ENCODE measurements at regions of chr5 and their contacts with region 1.

Region 1: DNA sequence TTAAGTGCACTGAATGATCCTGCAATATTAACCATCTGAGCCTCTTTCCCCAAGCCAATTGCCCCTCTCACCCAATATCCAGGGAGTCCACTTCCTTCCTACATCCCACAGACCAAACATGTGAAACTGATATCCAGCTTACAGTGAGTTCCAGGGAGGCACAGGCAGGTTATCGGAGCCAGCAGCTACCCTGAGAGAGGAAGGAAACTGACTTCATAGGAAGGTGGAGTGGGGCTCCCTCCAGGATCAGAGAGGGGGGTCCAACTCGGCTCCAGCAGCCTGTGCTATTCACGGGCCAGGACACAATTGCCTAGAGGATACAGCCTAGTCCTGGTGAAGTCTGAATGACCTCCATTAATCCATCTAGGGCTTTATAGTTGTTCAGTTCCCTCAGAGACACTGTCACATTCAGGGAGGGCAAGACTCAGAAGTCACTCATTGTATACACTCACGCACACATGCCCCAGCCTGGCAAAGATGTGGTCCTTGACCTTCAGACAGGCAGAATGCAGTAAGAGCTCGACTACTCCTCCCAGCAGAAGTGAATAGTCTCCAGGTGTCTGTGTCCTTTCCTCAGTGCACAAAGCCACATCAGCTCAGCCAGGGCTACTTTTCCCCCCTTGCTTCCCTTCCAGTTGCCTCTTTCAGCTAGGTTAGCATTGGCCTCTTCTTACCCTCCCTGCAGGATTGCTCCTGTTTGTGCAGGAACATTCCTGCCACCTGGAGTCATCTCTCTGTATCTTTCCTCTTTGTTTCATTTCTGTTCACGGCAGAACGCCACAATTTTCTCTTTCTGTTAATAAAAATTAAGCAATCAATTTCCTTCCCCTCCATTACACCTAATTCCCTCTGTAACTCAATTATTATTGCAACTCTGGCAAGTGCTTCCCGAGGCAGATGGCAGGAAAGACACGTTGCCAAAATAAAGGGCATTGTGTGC is 501.7 kb downstream of the ARHGEF28 start:
- DNase-seq: peak; percentile 97
- H3K4me3 ChIP-seq: peak overlapping the region in 1 of 3 experiments; percentile 29
- H3K27ac ChIP-seq: peak overlapping the region; percentile 74
- H3K4me1 ChIP-seq: peaks cover 34% of the 10 kb centered on the region
- H3K27me3 ChIP-seq: no peaks in the 10 kb centered on the region
- CTCF ChIP-seq: peak in 1 of 2 donors; percentile 21
- POLR2A ChIP-seq: peak; percentile 56

Region 2: DNA sequence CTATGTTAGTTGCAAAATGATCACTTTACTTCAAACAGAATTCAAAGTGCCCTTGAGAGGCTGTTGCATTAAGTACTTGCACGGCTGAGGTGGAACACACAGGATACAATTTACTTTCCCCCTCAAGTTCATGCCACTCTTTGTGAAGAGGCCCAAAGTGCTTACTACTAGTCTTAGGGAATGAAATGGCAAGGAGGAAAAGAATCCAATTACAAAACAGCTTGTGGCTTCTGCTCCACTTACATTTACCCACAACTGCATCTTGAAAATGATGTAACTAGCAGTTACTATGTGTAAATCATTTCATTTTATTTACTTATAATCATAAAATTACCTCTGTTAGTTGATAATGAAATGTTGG is 693.7 kb before region 1 on chr5:
- CTCF ChIA-PET with region 1: no interaction called
- POLR2A ChIA-PET with region 1: no interaction called
- dilution Hi-C with region 1: no loop called
- intact Hi-C with region 1: no loop called
- DNase-seq: no peak
- H3K4me3 ChIP-seq: no peak overlapping the region
- H3K27ac ChIP-seq: no peak overlapping the region
- H3K4me1 ChIP-seq: peaks cover 6% of the 10 kb centered on the region
- H3K27me3 ChIP-seq: peaks cover 73 to 92% of the 10 kb centered on the region in 2 experiments
- CTCF ChIP-seq: no peak
- POLR2A ChIP-seq: no peak

Region 3: GRCh38 chr5:74056789-74057164 is 70.9 kb before region 1 on chr5:
- CTCF ChIA-PET with region 1: interaction called, 4 read pairs
- POLR2A ChIA-PET with region 1: no interaction called
- dilution Hi-C with region 1: no loop called
- intact Hi-C with region 1: loop called (anchors 2 kb)
- DNase-seq: peak; percentile 64
- H3K4me3 ChIP-seq: no peak overlapping the region
- H3K27ac ChIP-seq: no peak overlapping the region
- H3K4me1 ChIP-seq: no peaks in the 10 kb centered on the region
- H3K27me3 ChIP-seq: no peaks in the 10 kb centered on the region
- CTCF ChIP-seq: peak; percentile 39 to 57
- POLR2A ChIP-seq: no peak

Region 4: GRCh38 chr5:74098941-74099340 is 28.7 kb before region 1 on chr5:
- CTCF ChIA-PET with region 1: interaction called, 3 read pairs
- POLR2A ChIA-PET with region 1: interaction called, 4 read pairs
- dilution Hi-C with region 1: no loop called
- intact Hi-C with region 1: loop called (anchors 2 kb)
- DNase-seq: no peak
- H3K4me3 ChIP-seq: no peak overlapping the region
- H3K27ac ChIP-seq: no peak overlapping the region
- H3K4me1 ChIP-seq: peaks cover 7% of the 10 kb centered on the region
- H3K27me3 ChIP-seq: no peaks in the 10 kb centered on the region
- CTCF ChIP-seq: no peak
- POLR2A ChIP-seq: no peak

Region 5: DNA sequence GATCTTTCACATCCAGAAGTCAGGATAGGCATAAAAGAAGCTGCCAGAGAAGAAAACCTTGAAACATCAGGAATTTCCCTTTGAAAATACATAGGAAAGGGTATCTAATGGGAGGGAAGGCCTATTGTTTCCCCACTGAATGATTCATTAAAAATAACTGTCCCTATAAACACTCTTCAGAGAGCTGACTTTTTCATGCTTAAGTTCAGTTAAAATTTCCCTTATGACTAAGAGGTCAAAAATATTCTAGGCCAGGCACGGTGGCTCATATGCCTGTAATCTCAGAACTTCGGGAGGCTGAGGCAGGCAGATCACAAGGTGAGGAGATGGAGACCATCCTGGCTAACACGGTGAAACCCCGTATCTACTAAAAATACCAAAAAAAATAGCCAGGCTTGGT is 13.4 kb after region 1 on chr5:
- CTCF ChIA-PET with region 1: interaction called, 15 read pairs
- POLR2A ChIA-PET with region 1: interaction called, 3 read pairs
- dilution Hi-C with region 1: no loop called
- intact Hi-C with region 1: no loop called
- DNase-seq: peak; percentile 89
- H3K4me3 ChIP-seq: no peak overlapping the region
- H3K27ac ChIP-seq: peak overlapping the region; percentile 52
- H3K4me1 ChIP-seq: peaks cover 9% of the 10 kb centered on the region
- H3K27me3 ChIP-seq: no peaks in the 10 kb centered on the region
- CTCF ChIP-seq: no peak
- POLR2A ChIP-seq: no peak

Region 6: DNA sequence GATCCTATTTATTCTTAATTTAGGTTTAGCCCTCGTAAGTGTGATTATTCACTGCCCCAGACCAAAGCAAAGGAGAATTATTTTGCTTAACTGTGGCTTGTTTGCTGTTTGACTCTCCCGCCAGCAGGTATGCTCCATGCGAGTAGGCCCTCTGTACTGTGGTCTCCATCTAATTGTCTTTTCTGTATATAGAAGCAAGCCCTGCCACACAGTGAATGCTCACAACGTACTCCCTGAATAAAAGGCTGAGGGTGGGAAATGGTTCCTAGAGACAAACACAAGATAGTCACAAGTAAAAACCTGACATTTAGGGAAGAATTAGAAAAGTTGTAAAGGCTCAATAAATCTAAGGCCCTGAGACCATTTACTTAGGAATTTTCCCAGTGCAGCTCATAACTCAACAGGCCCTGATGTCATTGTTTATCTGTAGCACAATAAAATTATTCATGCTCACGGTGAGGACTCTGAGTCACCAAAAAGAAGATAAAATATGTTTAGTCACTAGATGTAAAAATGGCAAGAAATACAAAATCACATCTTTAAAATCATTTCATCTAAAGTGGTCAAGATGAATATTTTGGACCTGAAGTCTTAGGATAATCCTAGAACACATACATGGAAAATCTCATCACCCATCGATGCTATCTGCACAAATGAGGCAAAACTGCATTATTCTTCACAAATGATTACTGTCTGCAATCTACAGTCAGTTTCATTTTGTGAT is 39.7 kb after region 1 on chr5:
- CTCF ChIA-PET with region 1: no interaction called
- POLR2A ChIA-PET with region 1: no interaction called
- dilution Hi-C with region 1: no loop called
- intact Hi-C with region 1: loop called (anchors 1 kb)
- DNase-seq: peak; percentile 84
- H3K4me3 ChIP-seq: no peak overlapping the region
- H3K27ac ChIP-seq: peak overlapping the region; percentile 60
- H3K4me1 ChIP-seq: peaks cover 20% of the 10 kb centered on the region
- H3K27me3 ChIP-seq: peaks cover 2% of the 10 kb centered on the region in 2 experiments
- CTCF ChIP-seq: no peak
- POLR2A ChIP-seq: no peak

Region 7: DNA sequence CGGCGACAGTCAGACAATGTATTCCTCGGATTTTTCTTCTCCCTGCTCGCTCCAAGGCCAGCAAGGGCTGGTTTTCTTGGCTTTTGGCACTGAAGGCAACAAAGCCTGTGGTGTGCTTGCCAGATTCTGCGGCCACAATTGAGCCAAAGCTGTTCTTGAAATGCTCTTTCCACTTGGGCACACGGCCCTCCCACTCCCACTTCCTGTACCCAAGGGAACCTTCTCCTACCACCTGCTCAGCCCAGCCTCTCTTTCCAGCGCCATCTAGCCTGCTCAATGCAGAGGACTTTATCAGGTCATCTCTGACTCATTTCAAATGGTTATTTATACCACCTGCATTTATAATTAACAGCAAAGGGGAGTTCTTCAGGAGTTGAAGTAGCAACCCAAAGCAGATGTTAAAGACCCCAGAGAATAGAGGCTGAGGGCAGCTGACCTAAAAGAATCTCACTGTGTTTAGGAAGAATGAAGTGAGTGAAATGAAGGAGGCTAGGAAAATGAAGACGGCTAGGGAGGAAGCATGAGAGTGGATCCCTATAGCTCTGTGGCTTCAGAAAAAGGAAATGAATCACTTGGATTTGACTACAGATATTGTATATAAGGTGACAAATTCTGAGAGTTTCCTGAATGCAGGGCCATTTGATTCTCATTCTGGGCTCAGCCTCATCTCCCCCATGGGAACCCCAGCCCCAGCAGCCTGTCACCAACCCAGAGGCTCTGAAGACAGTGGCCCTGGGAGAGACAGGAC is 73.9 kb after region 1 on chr5:
- CTCF ChIA-PET with region 1: no interaction called
- POLR2A ChIA-PET with region 1: no interaction called
- dilution Hi-C with region 1: no loop called
- intact Hi-C with region 1: loop called (anchors 2 kb)
- DNase-seq: peak; percentile 85
- H3K4me3 ChIP-seq: peak overlapping the region in 1 of 3 experiments; percentile 11
- H3K27ac ChIP-seq: peak overlapping the region; percentile 49
- H3K4me1 ChIP-seq: peaks cover 25% of the 10 kb centered on the region
- H3K27me3 ChIP-seq: peaks cover 0 to 5% of the 10 kb centered on the region in 2 experiments
- CTCF ChIP-seq: no peak
- POLR2A ChIP-seq: no peak

Region 8: DNA sequence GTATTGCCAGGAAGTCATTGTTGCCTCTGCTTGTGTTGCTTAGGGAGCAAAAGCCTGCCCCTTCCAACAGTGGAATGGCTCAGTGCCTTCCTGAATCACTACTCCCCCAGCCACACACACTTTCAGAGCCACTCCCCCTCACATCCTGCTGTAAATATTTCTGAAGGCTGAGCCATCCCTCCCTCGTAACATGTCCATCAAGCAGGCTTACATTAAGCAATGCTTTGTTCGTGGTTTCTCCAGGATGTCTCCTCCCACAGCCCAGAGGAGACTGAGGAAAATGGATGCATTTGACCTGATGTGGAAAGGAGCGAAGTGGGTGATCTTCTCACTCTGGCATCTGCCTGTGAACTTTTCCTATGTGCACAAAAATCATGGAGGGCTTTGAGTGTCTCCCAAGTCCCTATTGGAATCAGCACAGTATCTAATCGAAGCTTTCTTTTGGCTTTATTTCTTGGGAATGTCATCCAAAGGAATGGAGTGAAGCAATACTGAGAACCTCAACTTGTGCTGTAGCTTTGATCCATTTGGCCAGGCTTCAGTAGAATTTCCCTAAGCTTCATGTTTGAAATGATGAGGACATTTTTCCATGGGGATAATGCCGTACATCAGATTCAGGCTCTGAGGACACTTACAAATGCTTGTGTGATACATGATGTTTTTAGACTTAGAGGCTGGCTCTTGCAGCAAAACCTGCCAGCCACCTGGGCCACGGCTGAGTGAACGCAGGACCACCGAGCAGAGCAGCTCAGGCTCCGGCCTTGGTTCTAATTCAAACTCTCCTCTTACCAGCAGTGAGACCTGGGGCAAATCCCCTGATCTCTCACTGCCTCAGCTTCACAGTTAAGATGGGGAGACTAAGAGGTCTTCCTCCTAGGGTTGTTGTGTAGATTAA is 123.7 kb after region 1 on chr5:
- CTCF ChIA-PET with region 1: no interaction called
- POLR2A ChIA-PET with region 1: no interaction called
- dilution Hi-C with region 1: no loop called
- intact Hi-C with region 1: loop called (anchors 2 kb)
- DNase-seq: peak; percentile 89
- H3K4me3 ChIP-seq: no peak overlapping the region
- H3K27ac ChIP-seq: no peak overlapping the region
- H3K4me1 ChIP-seq: peaks cover 9% of the 10 kb centered on the region
- H3K27me3 ChIP-seq: peaks cover 4 to 5% of the 10 kb centered on the region in 2 experiments
- CTCF ChIP-seq: no peak
- POLR2A ChIP-seq: no peak